Common myeloid progenitor, CD34-positive (primary cell): ENCODE measurements at regions of chr19 and their contacts with region 1.

Region 1: GRCh38 chr19:47514869-47515588 is at the start of gene NAPA:
- DNase-seq: peak; percentile 100
- H3K4me3 ChIP-seq: peak within 1 kb of the TSS; percentile 72 to 99 (median 97)
- H3K27ac ChIP-seq: peak within 1 kb of the TSS; percentile 97 to 99
- H3K4me1 ChIP-seq: peaks cover 13 to 68% (median 53%) of the 10 kb centered on the region in 4 experiments
- H3K27me3 ChIP-seq: no peaks in the 10 kb centered on the region

Region 2: GRCh38 chr19:47370045-47370611 is 144.9 kb before region 1 on chr19:
- CTCF ChIA-PET with region 1: no interaction called
- POLR2A ChIA-PET with region 1: no interaction called
- DNase-seq: peak; percentile 56 to 75 (median 74)
- H3K4me3 ChIP-seq: no peak overlapping the region
- H3K27ac ChIP-seq: no peak overlapping the region
- H3K4me1 ChIP-seq: peaks cover 0 to 9% (median 4%) of the 10 kb centered on the region in 4 experiments
- H3K27me3 ChIP-seq: no peaks in the 10 kb centered on the region

Region 3: GRCh38 chr19:47483800-47484690 is 31.0 kb before region 1 on chr19 and contains the start of gene KPTN:
- CTCF ChIA-PET with region 1: interaction called, 23 read pairs
- POLR2A ChIA-PET with region 1: interaction called, 5 read pairs
- DNase-seq: peak; percentile 95 to 96 (median 96)
- H3K4me3 ChIP-seq: peak within 1 kb of the TSS; percentile 71 to 95 (median 82)
- H3K27ac ChIP-seq: peak within 1 kb of the TSS; percentile 72 to 91
- H3K4me1 ChIP-seq: peaks cover 11 to 52% (median 51%) of the 10 kb centered on the region in 4 experiments
- H3K27me3 ChIP-seq: no peaks in the 10 kb centered on the region